ENCODE measurements at regions of chr4 and their contacts with region 1.

Region 1: GRCh38 chr4:53365486-53366300 is at the start of gene SCFD2:
- DNase-seq: peak; percentile 98
- ATAC-seq: peak; percentile 97
- H3K4me3 Mint-ChIP-seq: peak within 1 kb of the TSS; percentile 96
- H3K27ac Mint-ChIP-seq: peak within 1 kb of the TSS; percentile 92
- H3K4me1 Mint-ChIP-seq: peaks cover 34% of the 10 kb centered on the region
- H3K27me3 Mint-ChIP-seq: peaks cover 7% of the 10 kb centered on the region
- CTCF ChIP-seq: no peak
- total RNA-seq, gene SCFD2: 21.4 to 22.1 TPM

Region 2: GRCh38 chr4:53377319-53378170 is 11.9 kb after region 1 on chr4 and contains the start of gene FIP1L1:
- CTCF ChIA-PET with region 1: interaction called, 7 read pairs
- POLR2A ChIA-PET with region 1: interaction called, 13 read pairs
- intact Hi-C with region 1: no loop called
- DNase-seq: peak; percentile 96
- ATAC-seq: peak; percentile 98
- H3K4me3 Mint-ChIP-seq: peak within 1 kb of the TSS; percentile 95
- H3K27ac Mint-ChIP-seq: peak within 1 kb of the TSS; percentile 97
- H3K4me1 Mint-ChIP-seq: peaks cover 34% of the 10 kb centered on the region
- H3K27me3 Mint-ChIP-seq: no peaks in the 10 kb centered on the region
- CTCF ChIP-seq: no peak
- total RNA-seq, gene FIP1L1: 67.3 to 67.6 TPM

Region 3: DNA sequence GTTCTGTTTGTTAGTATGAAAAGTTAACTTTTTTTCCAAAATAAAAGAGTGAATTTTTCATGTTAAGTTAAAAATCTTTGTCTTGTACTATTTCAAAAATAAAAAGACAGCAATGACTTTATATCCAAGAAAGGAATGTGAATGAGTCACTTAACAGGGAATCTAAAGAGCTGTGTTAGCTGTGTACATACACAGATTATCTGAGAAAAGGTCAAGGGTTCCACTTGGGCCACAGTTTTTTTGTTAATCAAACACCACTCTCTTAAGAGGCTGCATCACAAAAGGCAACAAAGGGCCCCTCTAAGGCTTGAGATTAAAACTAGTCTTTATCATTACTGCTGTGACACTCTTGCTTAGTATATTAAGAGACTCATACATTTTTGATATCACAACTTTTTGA is 93.9 kb after region 1 on chr4:
- CTCF ChIA-PET with region 1: no interaction called
- POLR2A ChIA-PET with region 1: no interaction called
- intact Hi-C with region 1: no loop called
- DNase-seq: no peak
- ATAC-seq: no peak
- H3K4me3 Mint-ChIP-seq: no peak overlapping the region
- H3K27ac Mint-ChIP-seq: no peak overlapping the region
- H3K4me1 Mint-ChIP-seq: no peaks in the 10 kb centered on the region
- H3K27me3 Mint-ChIP-seq: no peaks in the 10 kb centered on the region
- CTCF ChIP-seq: no peak